Naive thymus-derived CD4-positive, alpha-beta T cell (primary cell): ENCODE measurements at regions of chr7 and their contacts with region 1.

Region 1: GRCh38 chr7:117047496-117047895 is 94.2 kb downstream of the ST7 start:
- DNase-seq: no peak
- ATAC-seq: no peak
- H3K4me3 ChIP-seq: no peak overlapping the region
- H3K4me3 Mint-ChIP-seq: no peak overlapping the region
- H3K27ac ChIP-seq: no peak overlapping the region
- H3K27ac Mint-ChIP-seq: no peak overlapping the region
- H3K4me1 ChIP-seq: peaks cover 0 to 12% of the 10 kb centered on the region in 2 donors
- H3K4me1 Mint-ChIP-seq: peaks cover 14 to 34% (median 26%) of the 10 kb centered on the region in 7 donors
- H3K27me3 ChIP-seq: no peaks in the 10 kb centered on the region
- H3K27me3 Mint-ChIP-seq: peaks cover 0 to 33% (median 0%) of the 10 kb centered on the region in 5 donors

Region 2: DNA sequence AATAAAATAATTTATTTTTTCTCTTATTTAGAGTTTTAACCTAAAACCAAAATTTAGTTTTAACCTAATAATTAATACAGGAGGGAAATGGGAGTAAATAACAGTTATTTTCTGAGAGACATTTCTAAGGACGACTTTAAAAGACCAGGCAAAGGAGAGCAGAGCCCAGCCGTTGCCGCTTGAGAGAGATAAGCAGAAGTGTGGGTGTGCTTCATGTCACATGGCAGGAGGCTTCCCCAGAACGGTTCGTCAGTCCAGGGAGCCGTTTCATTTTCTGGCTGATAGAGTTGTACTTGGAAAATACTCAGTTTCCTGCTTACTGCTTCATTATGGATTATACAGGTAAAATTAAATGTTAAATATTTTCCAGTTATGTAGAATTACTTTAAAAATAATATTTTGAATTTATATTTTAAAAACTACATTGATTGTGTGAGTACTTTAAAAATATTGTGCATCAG is 32.8 kb before region 1 on chr7:
- CTCF ChIA-PET with region 1: no interaction called
- POLR2A ChIA-PET with region 1: no interaction called
- intact Hi-C with region 1: loop called in 1 of 2 experiments (anchors 2 kb)
- DNase-seq: no peak
- ATAC-seq: peak; percentile 74
- H3K4me3 ChIP-seq: no peak overlapping the region
- H3K4me3 Mint-ChIP-seq: peak overlapping the region in 3 of 10 donors; percentile 1 to 45 (median 35)
- H3K27ac ChIP-seq: no peak overlapping the region
- H3K27ac Mint-ChIP-seq: no peak overlapping the region
- H3K4me1 ChIP-seq: peaks cover 9 to 21% of the 10 kb centered on the region in 2 donors
- H3K4me1 Mint-ChIP-seq: peaks cover 23 to 41% (median 33%) of the 10 kb centered on the region in 7 donors
- H3K27me3 ChIP-seq: no peaks in the 10 kb centered on the region
- H3K27me3 Mint-ChIP-seq: peaks cover 0 to 53% (median 0%) of the 10 kb centered on the region in 5 donors

Region 3: DNA sequence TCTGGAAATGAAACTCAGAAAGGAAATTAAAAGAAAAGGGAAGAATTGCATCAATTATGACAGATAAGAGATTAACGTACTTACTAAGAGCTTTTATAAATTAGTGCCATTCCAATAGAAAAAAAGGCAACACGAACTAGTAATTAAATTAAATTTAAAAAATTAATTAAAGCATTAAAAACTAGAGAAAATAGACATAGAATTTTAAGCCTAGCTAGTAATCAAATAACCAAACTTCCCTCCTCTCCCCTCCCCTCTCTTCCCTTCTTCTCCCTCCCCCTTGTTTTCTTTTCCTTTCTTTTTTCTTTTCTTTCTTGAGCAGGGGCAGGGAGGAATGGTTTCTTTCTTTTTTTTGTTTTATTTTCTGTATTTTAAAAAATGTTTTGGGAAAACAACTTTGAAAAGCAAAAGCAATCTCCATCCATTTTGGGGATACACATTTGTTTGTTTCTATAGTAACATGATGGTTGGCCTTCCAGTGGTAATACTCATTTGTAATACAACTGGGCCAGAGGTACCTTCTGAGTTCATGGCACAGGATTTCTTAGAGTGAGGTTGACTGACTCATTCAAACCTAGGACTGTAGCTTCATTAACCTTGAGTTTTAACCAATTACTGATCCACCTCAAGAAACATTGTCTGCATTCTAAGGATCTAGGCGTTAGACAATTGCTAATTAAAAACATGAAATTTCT is 38.4 kb after region 1 on chr7:
- CTCF ChIA-PET with region 1: no interaction called
- POLR2A ChIA-PET with region 1: no interaction called
- intact Hi-C with region 1: loop called in 1 of 2 experiments (anchors 5 kb)
- DNase-seq: no peak
- ATAC-seq: no peak
- H3K4me3 ChIP-seq: no peak overlapping the region
- H3K4me3 Mint-ChIP-seq: no peak overlapping the region
- H3K27ac ChIP-seq: no peak overlapping the region
- H3K27ac Mint-ChIP-seq: no peak overlapping the region
- H3K4me1 ChIP-seq: peaks cover 6 to 12% of the 10 kb centered on the region in 2 donors
- H3K4me1 Mint-ChIP-seq: peaks cover 11 to 30% (median 21%) of the 10 kb centered on the region in 7 donors
- H3K27me3 ChIP-seq: no peaks in the 10 kb centered on the region
- H3K27me3 Mint-ChIP-seq: peaks cover 0 to 8% (median 0%) of the 10 kb centered on the region in 5 donors